Heart right ventricle (tissue), 16 donors: ENCODE measurements at regions of chr14 and their contacts with region 1.

Region 1: GRCh38 chr14:85528080-85528896 is 1.7 kb upstream of the FLRT2 start:
- DNase-seq: no peak
- ATAC-seq: peak in 6 of 8 donors; percentile 54 to 71 (median 67)
- H3K4me3 ChIP-seq: peak overlapping the region in 9 of 10 donors; percentile 51 to 68 (median 61)
- H3K27ac ChIP-seq: peak overlapping the region in 9 of 10 donors; percentile 9 to 75 (median 70)
- H3K4me1 ChIP-seq: peaks cover 8 to 57% (median 44%) of the 10 kb centered on the region in 9 donors
- H3K27me3 ChIP-seq: peaks cover 0 to 50% (median 41%) of the 10 kb centered on the region in 7 donors
- CTCF ChIP-seq: peak in 7 of 9 donors; percentile 27 to 72 (median 62)

Region 2: DNA sequence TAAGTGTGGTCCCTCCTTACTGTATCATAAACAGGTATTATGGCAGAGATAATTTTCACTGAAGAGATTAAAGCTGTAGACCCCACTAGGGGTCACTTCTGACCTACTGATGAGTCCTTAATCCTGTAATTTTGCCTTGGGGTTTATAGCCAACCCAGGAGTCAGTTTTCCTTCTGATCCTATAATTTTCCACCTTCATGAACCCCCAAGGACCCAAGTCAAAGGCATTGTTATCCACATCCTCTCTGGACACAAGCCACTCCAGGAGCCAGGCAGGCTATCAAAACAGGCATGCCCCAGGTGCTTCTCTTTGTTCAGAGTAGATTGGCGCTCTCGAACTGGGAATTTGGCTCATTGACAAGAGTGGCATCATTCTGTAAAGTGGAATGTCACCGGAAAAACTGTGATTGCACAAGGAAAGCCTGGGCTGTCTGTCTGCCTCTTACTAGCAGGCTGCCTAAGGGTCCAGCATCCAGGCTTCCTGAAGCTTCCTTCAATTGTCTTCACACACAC is 1521.6 kb before region 1 on chr14:
- intact Hi-C with region 1: loop called in 3 of 10 experiments (anchors 10 kb)
- DNase-seq: peak in 1 of 2 donors; percentile 36
- ATAC-seq: peak in 7 of 8 donors; percentile 46 to 82 (median 63)
- H3K4me3 ChIP-seq: no peak overlapping the region
- H3K27ac ChIP-seq: no peak overlapping the region
- H3K4me1 ChIP-seq: peaks cover 0 to 12% (median 6%) of the 10 kb centered on the region in 9 donors
- H3K27me3 ChIP-seq: no peaks in the 10 kb centered on the region
- CTCF ChIP-seq: peak in 7 of 9 donors; percentile 18 to 54 (median 37)

Region 3: GRCh38 chr14:84254290-84254689 is 1274.0 kb before region 1 on chr14:
- intact Hi-C with region 1: loop called in 1 of 10 experiments (anchors 10 kb)
- DNase-seq: peak in 1 of 2 donors; percentile 47
- ATAC-seq: peak; percentile 71 to 97 (median 90)
- H3K4me3 ChIP-seq: peak overlapping the region in 3 of 10 donors; percentile 3 to 11 (median 9)
- H3K27ac ChIP-seq: peak overlapping the region in 1 of 10 donors; percentile 55
- H3K4me1 ChIP-seq: peaks cover 0 to 56% (median 17%) of the 10 kb centered on the region in 9 donors
- H3K27me3 ChIP-seq: no peaks in the 10 kb centered on the region
- CTCF ChIP-seq: no peak

Region 4: GRCh38 chr14:85195872-85196477 is 332.3 kb before region 1 on chr14:
- intact Hi-C with region 1: loop called in 2 of 10 experiments (anchors 5 to 10 kb)
- DNase-seq: no peak
- ATAC-seq: no peak
- H3K4me3 ChIP-seq: no peak overlapping the region
- H3K27ac ChIP-seq: no peak overlapping the region
- H3K4me1 ChIP-seq: no peaks in the 10 kb centered on the region
- H3K27me3 ChIP-seq: no peaks in the 10 kb centered on the region
- CTCF ChIP-seq: peak in 7 of 9 donors; percentile 30 to 57 (median 50)

Region 5: GRCh38 chr14:85402569-85403162 is 125.6 kb before region 1 on chr14:
- intact Hi-C with region 1: loop called in 2 of 10 experiments (anchors 10 kb)
- DNase-seq: no peak
- ATAC-seq: peak in 1 of 8 donors; percentile 46
- H3K4me3 ChIP-seq: no peak overlapping the region
- H3K27ac ChIP-seq: no peak overlapping the region
- H3K4me1 ChIP-seq: peaks cover 0 to 12% (median 0%) of the 10 kb centered on the region in 9 donors
- H3K27me3 ChIP-seq: no peaks in the 10 kb centered on the region
- CTCF ChIP-seq: no peak

Region 6: DNA sequence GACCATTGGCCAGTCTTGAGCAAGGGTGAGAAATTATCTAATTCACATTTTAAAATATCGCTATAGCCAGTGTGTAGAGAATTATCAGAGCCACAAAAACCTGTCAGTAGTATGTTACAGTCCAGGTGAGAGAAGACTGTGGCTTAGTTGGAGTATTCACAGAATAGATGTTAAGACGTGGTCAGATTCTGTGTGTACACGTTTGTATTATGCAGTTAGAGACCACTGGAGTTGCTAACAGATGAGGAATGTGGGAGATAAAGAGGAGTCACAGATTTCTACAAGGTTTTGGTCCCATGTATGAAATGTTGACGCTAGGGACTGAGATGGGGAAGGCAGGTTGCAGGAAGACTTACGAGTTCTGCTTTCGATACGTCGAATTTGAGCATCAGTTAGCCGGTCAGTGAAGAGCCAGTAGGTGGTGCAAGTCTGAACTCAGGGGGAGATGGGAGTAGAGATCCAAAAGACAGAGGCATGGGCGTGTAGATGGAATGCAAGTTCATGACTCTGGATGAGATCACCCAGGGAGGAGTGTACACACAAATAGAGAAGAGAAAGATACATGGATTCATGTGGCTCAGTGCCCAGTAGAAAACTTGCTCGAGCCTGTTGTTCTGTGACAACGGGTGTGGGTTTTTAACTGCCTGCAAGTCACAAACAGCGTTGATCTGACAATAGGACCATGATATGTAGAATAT is 113.1 kb before region 1 on chr14:
- intact Hi-C with region 1: loop called in 4 of 10 experiments (anchors 5 to 10 kb)
- DNase-seq: peak in 1 of 2 donors; percentile 68
- ATAC-seq: peak; percentile 73 to 98 (median 92)
- H3K4me3 ChIP-seq: peak overlapping the region in 5 of 10 donors; percentile 15 to 26 (median 19)
- H3K27ac ChIP-seq: peak overlapping the region in 3 of 10 donors; percentile 18 to 53 (median 20)
- H3K4me1 ChIP-seq: peaks cover 0 to 14% (median 0%) of the 10 kb centered on the region in 9 donors
- H3K27me3 ChIP-seq: no peaks in the 10 kb centered on the region
- CTCF ChIP-seq: peak in 7 of 9 donors; percentile 19 to 52 (median 31)

Region 7: GRCh38 chr14:85714069-85714468 is 185.8 kb after region 1 on chr14:
- intact Hi-C with region 1: no loop called
- DNase-seq: no peak
- ATAC-seq: no peak
- H3K4me3 ChIP-seq: no peak overlapping the region
- H3K27ac ChIP-seq: no peak overlapping the region
- H3K4me1 ChIP-seq: no peaks in the 10 kb centered on the region
- H3K27me3 ChIP-seq: no peaks in the 10 kb centered on the region
- CTCF ChIP-seq: no peak